Heart right ventricle (tissue), 16 donors: ENCODE measurements at regions of chr17 and their contacts with region 1.

Region 1: DNA sequence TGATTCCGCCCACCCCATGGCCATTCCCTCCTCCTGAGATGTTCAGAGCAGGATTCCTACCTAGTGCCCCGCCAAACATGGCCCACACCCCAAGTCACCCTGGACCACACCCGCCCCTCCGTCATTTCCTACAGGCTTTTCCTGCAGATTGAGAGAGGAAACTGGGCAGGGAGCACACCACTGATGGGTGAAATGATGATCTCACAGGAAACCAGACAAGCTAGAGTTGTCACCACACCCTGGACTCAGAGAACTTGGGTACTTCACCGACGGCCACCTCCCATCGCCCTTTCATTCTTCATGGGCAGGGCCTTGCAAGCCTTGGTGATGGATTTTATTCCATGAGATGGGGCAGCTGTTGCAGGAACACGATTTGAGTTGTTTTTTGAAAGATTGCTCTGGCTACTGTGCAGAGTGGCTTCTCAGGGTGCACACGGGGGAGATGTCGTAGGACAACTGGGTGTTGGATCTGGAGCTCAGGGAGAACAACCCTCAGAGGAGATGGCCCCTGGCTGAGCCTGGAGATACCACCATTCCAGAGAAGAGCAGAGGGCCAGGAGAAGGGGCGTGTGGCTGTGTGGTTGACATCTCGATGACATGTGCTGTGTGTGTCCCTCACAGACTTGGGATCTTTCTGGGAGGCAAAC is 7.4 kb upstream of the B9D1 start:
- DNase-seq: peak in 1 of 2 donors; percentile 54
- ATAC-seq: peak; percentile 39 to 83 (median 66)
- H3K4me3 ChIP-seq: no peak overlapping the region
- H3K27ac ChIP-seq: peak overlapping the region; percentile 0 to 82 (median 64)
- H3K4me1 ChIP-seq: peaks cover 4 to 51% (median 19%) of the 10 kb centered on the region in 9 donors
- H3K27me3 ChIP-seq: no peaks in the 10 kb centered on the region
- CTCF ChIP-seq: no peak

Region 2: GRCh38 chr17:19409509-19409908 is 39.5 kb after region 1 on chr17:
- intact Hi-C with region 1: loop called in 1 of 10 experiments (anchors 5 kb)
- DNase-seq: no peak
- ATAC-seq: no peak
- H3K4me3 ChIP-seq: no peak overlapping the region
- H3K27ac ChIP-seq: no peak overlapping the region
- H3K4me1 ChIP-seq: peaks cover 0 to 15% (median 0%) of the 10 kb centered on the region in 9 donors
- H3K27me3 ChIP-seq: peaks cover 0 to 6% (median 0%) of the 10 kb centered on the region in 7 donors
- CTCF ChIP-seq: no peak